Lower lobe of right lung (tissue), 2 donors: ENCODE measurements at regions of chr11 and their contacts with region 1.

Region 1: GRCh38 chr11:67353317-67354074 is at the start of gene POLD4:
- DNase-seq: peak; percentile 99
- ATAC-seq: peak; percentile 95
- H3K4me3 ChIP-seq: peak within 1 kb of the TSS; percentile 79
- H3K27ac ChIP-seq: peak within 1 kb of the TSS; percentile 94
- H3K4me1 ChIP-seq: peaks cover 68% of the 10 kb centered on the region
- H3K27me3 ChIP-seq: no peaks in the 10 kb centered on the region
- CTCF ChIP-seq: no peak
- total RNA-seq, gene POLD4: 86.6 TPM

Region 2: DNA sequence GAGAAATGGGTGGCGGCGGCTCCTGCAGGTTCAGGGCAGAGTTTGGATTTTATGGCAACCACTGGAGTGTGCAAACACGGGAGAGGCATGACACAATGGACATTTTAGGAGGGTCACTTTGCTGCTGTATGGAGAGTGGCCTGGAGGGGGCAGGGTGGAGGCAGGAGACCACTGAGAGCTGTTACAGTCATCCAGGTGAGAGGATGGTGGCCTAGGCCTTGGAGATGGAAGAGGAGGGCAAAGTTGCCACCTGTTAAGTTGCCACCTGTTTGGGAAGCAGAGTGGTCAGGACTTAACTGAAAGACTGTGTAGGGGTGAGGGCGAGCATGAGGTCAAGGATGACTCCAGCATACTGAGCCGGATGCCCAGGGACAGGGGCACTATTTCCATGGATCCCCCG is 36.0 kb after region 1 on chr11:
- intact Hi-C with region 1: loop called (anchors 5 kb)
- DNase-seq: no peak
- ATAC-seq: no peak
- H3K4me3 ChIP-seq: no peak overlapping the region
- H3K27ac ChIP-seq: no peak overlapping the region
- H3K4me1 ChIP-seq: peaks cover 16% of the 10 kb centered on the region
- H3K27me3 ChIP-seq: no peaks in the 10 kb centered on the region
- CTCF ChIP-seq: peak; percentile 44